Naive thymus-derived CD4-positive, alpha-beta T cell (primary cell): ENCODE measurements at regions of chr16 and their contacts with region 1.

Region 1: GRCh38 chr16:89764711-89765201 is 43.4 kb downstream of the ZNF276 start:
- DNase-seq: no peak
- ATAC-seq: peak; percentile 81
- H3K4me3 ChIP-seq: peak overlapping the region; percentile 58
- H3K4me3 Mint-ChIP-seq: peak overlapping the region; percentile 56 to 94 (median 69)
- H3K27ac ChIP-seq: peak overlapping the region; percentile 43
- H3K27ac Mint-ChIP-seq: peak overlapping the region; percentile 49 to 91 (median 85)
- H3K4me1 ChIP-seq: peaks cover 20 to 27% of the 10 kb centered on the region in 2 donors
- H3K4me1 Mint-ChIP-seq: peaks cover 13 to 42% (median 33%) of the 10 kb centered on the region in 7 donors
- H3K27me3 ChIP-seq: no peaks in the 10 kb centered on the region
- H3K27me3 Mint-ChIP-seq: no peaks in the 10 kb centered on the region

Region 2: DNA sequence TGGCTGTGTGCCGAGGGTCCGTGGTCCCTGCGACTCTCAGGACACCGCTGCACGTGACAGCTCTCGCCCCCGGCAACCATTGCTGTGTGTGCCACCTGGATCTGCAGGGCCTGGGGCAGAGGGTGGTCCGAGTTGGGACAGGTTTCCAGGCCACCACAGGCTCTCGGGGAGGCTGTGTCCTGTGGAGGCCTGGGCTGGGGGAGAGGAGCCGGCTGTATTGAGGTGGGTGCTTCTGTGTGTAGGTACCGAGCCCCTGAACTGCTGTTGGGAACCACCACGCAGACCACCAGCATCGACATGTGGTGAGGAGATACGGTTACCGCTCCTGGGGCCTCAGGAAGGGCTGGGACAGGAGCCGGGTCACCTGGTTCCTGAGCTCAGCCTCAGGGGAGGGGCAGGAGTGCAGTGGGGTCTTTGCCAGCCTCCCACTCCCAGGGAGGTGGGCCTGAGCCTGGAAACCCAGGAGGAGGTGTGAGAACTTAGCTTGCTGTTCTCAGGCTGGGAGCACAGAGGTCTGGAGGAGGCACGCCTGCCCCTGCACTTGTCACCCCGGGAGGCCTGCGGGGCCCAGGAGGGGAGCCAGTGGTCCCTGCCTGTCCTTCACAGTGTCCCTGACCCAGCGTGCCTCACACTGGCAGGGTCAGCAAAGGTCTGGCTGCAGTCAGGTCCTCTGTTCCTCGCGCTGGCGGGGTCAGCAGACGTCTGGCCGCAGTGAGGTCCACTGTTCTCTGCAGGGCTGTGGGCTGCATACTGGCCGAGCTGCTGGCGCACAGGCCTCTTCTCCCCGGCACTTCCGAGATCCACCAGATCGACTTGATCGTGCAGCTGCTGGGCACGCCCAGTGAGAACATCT is 70.6 kb before region 1 on chr16:
- CTCF ChIA-PET with region 1: no interaction called
- POLR2A ChIA-PET with region 1: no interaction called
- intact Hi-C with region 1: no loop called
- DNase-seq: no peak
- ATAC-seq: no peak
- H3K4me3 ChIP-seq: no peak overlapping the region
- H3K4me3 Mint-ChIP-seq: no peak overlapping the region
- H3K27ac ChIP-seq: no peak overlapping the region
- H3K27ac Mint-ChIP-seq: no peak overlapping the region
- H3K4me1 ChIP-seq: peaks cover 6 to 12% of the 10 kb centered on the region in 2 donors
- H3K4me1 Mint-ChIP-seq: peaks cover 3 to 11% (median 6%) of the 10 kb centered on the region in 7 donors
- H3K27me3 ChIP-seq: no peaks in the 10 kb centered on the region
- H3K27me3 Mint-ChIP-seq: no peaks in the 10 kb centered on the region

Region 3: GRCh38 chr16:89737341-89738071 is 27.2 kb before region 1 on chr16:
- CTCF ChIA-PET with region 1: no interaction called
- POLR2A ChIA-PET with region 1: interaction called, 10 read pairs
- intact Hi-C with region 1: loop called in 1 of 2 experiments (anchors 2 kb)
- DNase-seq: peak in 7 of 9 donors; percentile 63 to 83 (median 76)
- ATAC-seq: peak; percentile 86
- H3K4me3 ChIP-seq: no peak overlapping the region
- H3K4me3 Mint-ChIP-seq: peak overlapping the region; percentile 39 to 80 (median 66)
- H3K27ac ChIP-seq: peak overlapping the region; percentile 46
- H3K27ac Mint-ChIP-seq: peak overlapping the region; percentile 68 to 94 (median 86)
- H3K4me1 ChIP-seq: peaks cover 28 to 40% of the 10 kb centered on the region in 2 donors
- H3K4me1 Mint-ChIP-seq: peaks cover 4 to 70% (median 37%) of the 10 kb centered on the region in 7 donors
- H3K27me3 ChIP-seq: no peaks in the 10 kb centered on the region
- H3K27me3 Mint-ChIP-seq: no peaks in the 10 kb centered on the region

Region 4: DNA sequence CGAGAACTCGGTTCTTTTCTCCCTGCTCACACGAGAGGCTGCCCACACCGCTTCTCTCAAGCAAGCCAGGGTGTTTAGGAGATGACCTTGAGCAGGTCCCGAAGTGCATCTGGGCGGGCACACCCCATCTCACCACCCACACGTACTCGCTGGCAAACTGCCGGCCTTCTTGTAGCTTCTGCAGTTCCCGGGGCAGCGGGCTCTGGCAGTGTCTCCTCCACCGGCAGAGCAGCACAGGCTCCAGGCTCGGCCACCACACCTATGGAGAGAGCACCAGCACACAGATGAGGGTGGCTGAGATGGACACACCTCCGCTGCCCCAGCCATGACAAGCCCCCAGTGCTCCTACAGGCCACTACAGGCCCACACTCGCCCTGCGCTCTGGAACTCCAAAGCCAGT is 19.9 kb before region 1 on chr16:
- CTCF ChIA-PET with region 1: no interaction called
- POLR2A ChIA-PET with region 1: interaction called, 13 read pairs
- intact Hi-C with region 1: loop called in 1 of 2 experiments (anchors 2 kb)
- DNase-seq: no peak
- ATAC-seq: no peak
- H3K4me3 ChIP-seq: no peak overlapping the region
- H3K4me3 Mint-ChIP-seq: no peak overlapping the region
- H3K27ac ChIP-seq: peak overlapping the region; percentile 47
- H3K27ac Mint-ChIP-seq: peak overlapping the region in 7 of 9 donors; percentile 52 to 86 (median 71)
- H3K4me1 ChIP-seq: peaks cover 0 to 12% of the 10 kb centered on the region in 2 donors
- H3K4me1 Mint-ChIP-seq: peaks cover 4 to 60% (median 33%) of the 10 kb centered on the region in 7 donors
- H3K27me3 ChIP-seq: no peaks in the 10 kb centered on the region
- H3K27me3 Mint-ChIP-seq: no peaks in the 10 kb centered on the region

Region 5: DNA sequence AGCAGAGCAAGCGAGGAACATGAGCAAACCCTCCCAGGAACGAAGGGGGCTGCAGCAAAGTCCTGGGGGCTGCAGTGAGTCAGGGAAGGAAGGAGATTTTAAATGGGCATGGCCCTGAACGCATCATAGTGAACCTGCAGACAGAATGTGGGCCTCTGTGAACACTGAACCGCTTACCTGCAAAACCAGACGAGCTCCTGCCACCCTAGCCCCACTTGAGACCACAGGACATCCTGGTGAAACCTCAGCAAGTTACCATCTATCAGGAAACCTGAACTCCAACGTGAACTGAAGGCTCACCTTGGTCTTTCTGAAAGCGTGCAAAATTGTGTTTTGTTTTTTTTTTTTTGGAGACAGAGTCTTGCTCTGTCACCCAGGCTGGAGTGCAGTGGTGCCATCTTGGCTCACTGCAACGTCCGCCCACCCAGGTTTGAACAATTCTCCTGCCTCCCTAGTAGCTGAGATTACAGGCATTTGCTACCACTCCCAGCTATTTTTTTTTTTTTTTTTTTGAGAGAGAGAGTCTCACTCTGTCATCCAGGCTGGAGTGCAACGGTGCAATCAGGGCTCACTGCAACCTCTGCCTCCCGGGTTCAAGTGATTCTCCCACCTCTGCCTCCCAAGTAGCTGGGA is 20.9 kb after region 1 on chr16:
- CTCF ChIA-PET with region 1: no interaction called
- POLR2A ChIA-PET with region 1: interaction called, 9 read pairs
- intact Hi-C with region 1: loop called in 1 of 2 experiments (anchors 2 kb)
- DNase-seq: peak in 7 of 9 donors; percentile 27 to 61 (median 49)
- ATAC-seq: peak; percentile 82
- H3K4me3 ChIP-seq: no peak overlapping the region
- H3K4me3 Mint-ChIP-seq: peak overlapping the region; percentile 13 to 80 (median 60)
- H3K27ac ChIP-seq: no peak overlapping the region
- H3K27ac Mint-ChIP-seq: peak overlapping the region; percentile 61 to 91 (median 80)
- H3K4me1 ChIP-seq: peaks cover 28 to 36% of the 10 kb centered on the region in 2 donors
- H3K4me1 Mint-ChIP-seq: peaks cover 21 to 32% (median 28%) of the 10 kb centered on the region in 7 donors
- H3K27me3 ChIP-seq: no peaks in the 10 kb centered on the region
- H3K27me3 Mint-ChIP-seq: no peaks in the 10 kb centered on the region